Astrocyte of the cerebellum (primary cell): ENCODE measurements at regions of chr2 and their contacts with region 1.

Region 1: GRCh38 chr2:31909661-31910060 is 101.1 kb downstream of the MEMO1 start:
- DNase-seq: no peak
- H3K4me3 ChIP-seq: no peak overlapping the region
- CTCF ChIP-seq: no peak

Region 2: GRCh38 chr2:31728406-31729064 is 181.1 kb before region 1 on chr2:
- in situ Hi-C with region 1: no loop called
- DNase-seq: no peak
- H3K4me3 ChIP-seq: no peak overlapping the region
- CTCF ChIP-seq: no peak

Region 3: GRCh38 chr2:31945572-31945935 is 35.9 kb after region 1 on chr2:
- in situ Hi-C with region 1: loop called (anchors 5 kb)
- DNase-seq: no peak
- H3K4me3 ChIP-seq: no peak overlapping the region
- CTCF ChIP-seq: no peak

Region 4: DNA sequence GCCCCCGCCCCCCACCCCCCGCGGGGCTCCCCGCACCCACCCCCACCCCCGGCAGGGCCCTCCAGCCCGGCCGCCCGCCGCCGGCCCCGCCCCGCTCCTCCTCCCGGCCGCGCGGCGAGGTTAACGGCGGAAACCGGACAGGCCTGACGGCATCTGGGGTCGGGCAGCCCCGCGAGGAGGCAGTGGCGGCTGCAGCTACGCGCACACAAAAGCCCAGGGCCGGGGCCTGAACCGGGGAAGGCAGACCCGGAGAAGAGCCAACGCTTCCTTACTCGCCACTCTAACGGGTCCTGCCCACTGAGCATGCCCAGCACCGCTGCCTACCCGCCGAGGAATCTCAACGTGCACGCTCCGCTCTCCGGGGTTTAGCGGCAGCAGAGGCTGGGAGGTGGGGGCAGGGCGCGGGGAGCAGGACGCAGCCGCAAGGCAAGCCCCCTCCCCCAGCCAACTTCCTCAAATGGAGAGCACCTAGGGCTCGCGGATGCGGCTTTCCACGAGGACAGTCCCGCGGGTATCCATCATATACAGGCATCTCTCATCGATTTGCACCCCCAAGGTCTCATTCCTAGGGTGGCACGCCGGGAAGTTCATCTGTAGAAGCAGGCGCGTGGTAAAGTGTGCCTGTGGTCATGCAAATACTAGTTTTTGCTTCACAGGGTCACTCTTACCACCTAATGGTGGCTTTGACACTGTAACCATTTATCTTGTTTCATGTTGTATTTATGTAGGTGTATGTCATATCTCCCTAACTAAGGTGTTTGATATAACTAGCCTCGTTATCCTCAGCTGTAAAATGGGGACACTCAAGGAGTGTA is 101.2 kb after region 1 on chr2 and contains the start of gene MEMO1:
- in situ Hi-C with region 1: no loop called
- DNase-seq: peak; percentile 84
- H3K4me3 ChIP-seq: peak within 1 kb of the TSS; percentile 89
- CTCF ChIP-seq: no peak